Mammary epithelial cell (primary cell): ENCODE measurements at regions of chr5 and their contacts with region 1.

Region 1: GRCh38 chr5:85311536-85311935 is 926.9 kb upstream of the EDIL3 start:
- DNase-seq: no peak
- H3K4me3 ChIP-seq: no peak overlapping the region
- H3K27ac ChIP-seq: no peak overlapping the region
- H3K4me1 ChIP-seq: no peaks in the 10 kb centered on the region
- H3K27me3 ChIP-seq: no peaks in the 10 kb centered on the region
- CTCF ChIP-seq: no peak

Region 2: GRCh38 chr5:84393969-84394368 is 917.6 kb before region 1 on chr5:
- CTCF ChIA-PET with region 1: interaction called, 10 read pairs
- dilution Hi-C with region 1: no loop called
- in situ Hi-C with region 1: no loop called
- intact Hi-C with region 1: no loop called
- DNase-seq: peak; percentile 86
- H3K4me3 ChIP-seq: no peak overlapping the region
- H3K27ac ChIP-seq: no peak overlapping the region
- H3K4me1 ChIP-seq: peaks cover 7% of the 10 kb centered on the region
- H3K27me3 ChIP-seq: no peaks in the 10 kb centered on the region
- CTCF ChIP-seq: peak in 1 of 2 donors; percentile 3

Region 3: DNA sequence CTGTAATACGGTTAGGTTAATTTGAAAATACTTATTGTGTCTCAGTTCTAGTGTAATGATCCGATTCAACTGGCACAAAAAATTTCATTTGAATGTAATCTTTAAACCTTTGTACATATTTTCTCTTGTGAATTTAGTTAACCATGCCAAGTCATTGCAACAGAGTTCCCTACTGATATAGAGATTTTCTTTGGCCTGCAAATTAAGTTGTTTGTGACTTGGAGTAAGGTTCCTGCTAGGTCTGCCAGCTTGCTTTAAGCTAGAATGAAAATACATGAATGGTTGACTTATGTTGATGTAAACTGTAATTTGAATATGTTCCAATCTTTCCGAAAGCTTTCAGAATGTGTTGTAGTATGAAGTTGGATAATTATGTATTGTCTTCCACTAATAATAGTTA is 77.2 kb after region 1 on chr5:
- CTCF ChIA-PET with region 1: no interaction called
- dilution Hi-C with region 1: no loop called
- in situ Hi-C with region 1: no loop called
- intact Hi-C with region 1: no loop called
- DNase-seq: no peak
- H3K4me3 ChIP-seq: no peak overlapping the region
- H3K27ac ChIP-seq: no peak overlapping the region
- H3K4me1 ChIP-seq: no peaks in the 10 kb centered on the region
- H3K27me3 ChIP-seq: no peaks in the 10 kb centered on the region
- CTCF ChIP-seq: no peak